Activated CD4-positive, alpha-beta T cell treated with anti-CD3 and anti-CD28 coated beads for 36 hours (primary cell): ENCODE measurements at regions of chr1 and their contacts with region 1.

Region 1: GRCh38 chr1:230899841-230900251 is 31.5 kb upstream of the C1orf198 start:
- DNase-seq: no peak
- ATAC-seq: no peak
- H3K4me3 Mint-ChIP-seq: no peak overlapping the region
- H3K27ac Mint-ChIP-seq: no peak overlapping the region
- H3K4me1 Mint-ChIP-seq: peaks cover 3% of the 10 kb centered on the region
- H3K27me3 Mint-ChIP-seq: no peaks in the 10 kb centered on the region

Region 2: GRCh38 chr1:230768903-230769838 is 130.7 kb before region 1 on chr1:
- CTCF ChIA-PET with region 1: no interaction called
- POLR2A ChIA-PET with region 1: no interaction called
- intact Hi-C with region 1: no loop called
- DNase-seq: no peak
- ATAC-seq: no peak
- H3K4me3 Mint-ChIP-seq: no peak overlapping the region
- H3K27ac Mint-ChIP-seq: no peak overlapping the region
- H3K4me1 Mint-ChIP-seq: no peaks in the 10 kb centered on the region
- H3K27me3 Mint-ChIP-seq: peaks cover 5% of the 10 kb centered on the region

Region 3: GRCh38 chr1:230948301-230948700 is 48.5 kb after region 1 on chr1:
- CTCF ChIA-PET with region 1: no interaction called
- POLR2A ChIA-PET with region 1: interaction called, 12 read pairs
- intact Hi-C with region 1: no loop called
- DNase-seq: no peak
- ATAC-seq: no peak
- H3K4me3 Mint-ChIP-seq: no peak overlapping the region
- H3K27ac Mint-ChIP-seq: no peak overlapping the region
- H3K4me1 Mint-ChIP-seq: peaks cover 2% of the 10 kb centered on the region
- H3K27me3 Mint-ChIP-seq: no peaks in the 10 kb centered on the region